ENCODE measurements at regions of chr14 and their contacts with region 1.

Region 1: GRCh38 chr14:72646861-72647528 is 246.9 kb downstream of the DPF3 start:
- DNase-seq: no peak

Region 2: DNA sequence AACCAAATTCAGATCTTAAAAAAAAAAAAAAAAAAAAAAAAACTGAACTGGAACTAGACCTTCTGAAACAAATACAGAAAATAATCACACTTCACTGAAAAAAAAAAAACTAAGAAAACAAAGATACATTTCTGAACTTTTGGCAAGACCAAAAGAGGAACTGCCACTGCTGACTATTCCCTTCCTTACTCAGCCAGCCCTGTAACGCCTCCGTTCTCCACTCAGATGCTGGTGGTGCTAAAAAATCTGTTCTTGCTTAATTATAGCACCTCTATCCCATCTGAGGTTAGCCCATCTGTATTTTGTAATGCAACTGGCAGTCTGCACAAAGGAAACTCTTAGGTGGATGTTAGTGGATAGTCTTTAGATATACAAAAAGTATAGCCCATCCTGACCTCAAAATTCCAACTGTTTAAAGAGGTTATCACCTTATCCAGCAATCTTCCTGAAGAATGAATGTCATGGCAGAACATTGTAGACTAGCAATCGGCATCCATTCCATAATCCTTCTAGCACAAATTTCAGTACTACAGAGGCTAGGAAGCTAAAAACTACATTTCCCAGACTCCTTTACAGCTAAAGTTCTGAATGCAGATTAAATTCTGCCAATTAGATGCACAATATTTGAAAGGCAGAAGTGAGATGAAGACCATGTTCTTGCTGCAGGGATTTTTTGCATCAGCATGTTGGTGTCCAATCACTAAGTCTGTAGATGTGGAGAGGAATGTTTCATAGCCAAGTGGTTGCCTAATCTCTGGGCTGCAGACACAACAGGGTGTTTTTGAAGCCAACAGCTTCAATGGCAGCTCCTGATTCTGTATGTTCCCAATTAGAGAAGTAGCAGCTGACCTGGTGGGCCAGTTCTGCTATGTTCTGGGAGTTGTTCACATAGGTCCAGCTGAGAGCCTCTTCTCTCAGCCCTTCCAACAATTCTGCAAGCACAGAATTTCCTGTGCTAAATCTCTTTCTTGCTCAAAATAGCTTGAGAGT is 1843.4 kb before region 1 on chr14:
- intact Hi-C with region 1: loop called in 1 of 2 experiments (anchors 5 kb)
- DNase-seq: no peak

Region 3: GRCh38 chr14:70882776-70883492 is 1764.1 kb before region 1 on chr14:
- intact Hi-C with region 1: no loop called
- DNase-seq: no peak

Region 4: DNA sequence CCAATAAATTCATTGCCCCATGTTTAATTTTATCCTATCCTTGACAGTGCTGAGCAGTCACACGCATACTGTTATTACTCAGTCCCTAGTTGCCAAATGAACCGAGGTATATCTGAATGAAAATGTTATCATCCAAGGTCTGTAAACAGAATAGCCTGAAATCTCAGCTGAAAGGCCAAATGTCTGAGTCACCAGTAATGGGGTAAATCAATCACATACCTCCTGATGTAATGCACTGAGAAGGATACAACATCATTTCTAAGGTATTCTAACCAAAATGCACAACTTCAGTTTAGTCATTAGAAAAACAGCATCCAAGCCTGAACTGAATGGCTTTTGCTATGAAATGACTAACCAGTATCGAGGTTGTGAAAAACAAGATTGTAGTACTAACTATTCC is 18.3 kb after region 1 on chr14:
- intact Hi-C with region 1: no loop called
- DNase-seq: no peak

Measured in posterior vena cava (tissue), 2 donors.